Caco-2 (cell line): ENCODE measurements at regions of chr11 and their contacts with region 1.

Region 1: DNA sequence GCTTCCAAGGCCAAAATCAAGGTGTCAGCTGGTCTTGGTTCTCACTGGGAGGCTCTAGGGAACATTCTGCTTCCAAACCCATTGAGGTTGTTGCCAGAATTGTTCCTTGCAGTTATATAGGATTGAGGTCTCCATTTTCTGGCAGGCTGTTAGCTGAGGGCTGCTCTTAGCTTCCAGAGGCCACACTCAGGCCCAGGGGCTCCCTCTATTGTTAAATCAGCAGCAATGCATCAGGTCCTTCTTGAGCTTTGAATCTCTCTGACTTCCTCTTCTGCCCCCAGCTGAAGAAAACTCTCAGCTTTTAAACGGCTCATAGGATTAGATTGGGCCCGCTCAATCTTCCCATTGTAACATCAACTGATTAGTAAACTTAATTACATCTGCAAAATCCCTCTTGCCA is 39.3 kb upstream of the BSX start:
- DNase-seq: peak; percentile 53 to 59
- H3K4me3 ChIP-seq: no peak overlapping the region
- H3K4me3 Mint-ChIP-seq: no peak overlapping the region
- H3K27ac Mint-ChIP-seq: no peak overlapping the region
- H3K4me1 ChIP-seq: no peaks in the 10 kb centered on the region
- H3K4me1 Mint-ChIP-seq: peaks cover 6% of the 10 kb centered on the region
- H3K27me3 ChIP-seq: no peaks in the 10 kb centered on the region; the same call in 1 of the 2 replicates
- H3K27me3 Mint-ChIP-seq: peaks cover 20% of the 10 kb centered on the region
- CTCF ChIP-seq: peak; percentile 79

Region 2: GRCh38 chr11:122584670-122585069 is 436.3 kb before region 1 on chr11:
- CTCF ChIA-PET with region 1: no interaction called
- POLR2A ChIA-PET with region 1: no interaction called
- intact Hi-C with region 1: loop called (anchors 5 kb)
- DNase-seq: no peak
- H3K4me3 ChIP-seq: no peak overlapping the region
- H3K4me3 Mint-ChIP-seq: no peak overlapping the region
- H3K27ac Mint-ChIP-seq: no peak overlapping the region
- H3K4me1 ChIP-seq: no peaks in the 10 kb centered on the region
- H3K4me1 Mint-ChIP-seq: peaks cover 7% of the 10 kb centered on the region
- H3K27me3 ChIP-seq: no peaks in the 10 kb centered on the region
- H3K27me3 Mint-ChIP-seq: peaks cover 9% of the 10 kb centered on the region
- CTCF ChIP-seq: no peak

Region 3: DNA sequence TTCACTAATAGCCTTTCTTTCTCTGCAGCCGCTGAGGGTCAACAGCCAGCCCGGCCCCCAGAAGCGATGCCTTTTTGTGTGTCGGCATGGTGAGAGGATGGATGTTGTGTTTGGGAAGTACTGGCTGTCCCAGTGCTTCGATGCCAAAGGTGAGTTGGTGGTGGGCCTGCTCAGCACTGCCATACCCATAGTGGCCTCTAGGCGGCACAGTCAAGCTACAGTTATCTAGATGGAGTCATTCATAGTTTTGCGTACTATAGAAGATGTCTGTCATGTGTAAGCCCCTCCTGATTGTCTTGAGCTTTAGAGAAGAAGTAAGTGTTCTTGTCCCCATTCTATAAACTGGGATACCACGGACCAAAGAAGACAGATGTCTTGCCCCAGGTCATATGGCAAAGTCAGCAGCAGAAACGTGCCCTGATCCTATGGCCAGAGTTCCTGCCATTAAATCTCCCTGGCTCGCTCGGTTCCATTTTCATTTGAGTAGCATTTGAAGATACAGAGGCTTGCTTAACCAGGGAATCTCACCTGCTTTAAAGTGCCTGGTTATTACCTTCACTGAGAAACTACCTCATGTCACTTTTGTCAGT is 224.7 kb before region 1 on chr11:
- CTCF ChIA-PET with region 1: interaction called, 3 read pairs
- POLR2A ChIA-PET with region 1: no interaction called
- intact Hi-C with region 1: loop called (anchors 5 kb)
- DNase-seq: peak; percentile 58 to 72
- H3K4me3 ChIP-seq: no peak overlapping the region
- H3K4me3 Mint-ChIP-seq: no peak overlapping the region
- H3K27ac Mint-ChIP-seq: no peak overlapping the region
- H3K4me1 ChIP-seq: no peaks in the 10 kb centered on the region
- H3K4me1 Mint-ChIP-seq: peaks cover 5% of the 10 kb centered on the region
- H3K27me3 ChIP-seq: no peaks in the 10 kb centered on the region
- H3K27me3 Mint-ChIP-seq: no peaks in the 10 kb centered on the region
- CTCF ChIP-seq: peak; percentile 87 to 96

Region 4: DNA sequence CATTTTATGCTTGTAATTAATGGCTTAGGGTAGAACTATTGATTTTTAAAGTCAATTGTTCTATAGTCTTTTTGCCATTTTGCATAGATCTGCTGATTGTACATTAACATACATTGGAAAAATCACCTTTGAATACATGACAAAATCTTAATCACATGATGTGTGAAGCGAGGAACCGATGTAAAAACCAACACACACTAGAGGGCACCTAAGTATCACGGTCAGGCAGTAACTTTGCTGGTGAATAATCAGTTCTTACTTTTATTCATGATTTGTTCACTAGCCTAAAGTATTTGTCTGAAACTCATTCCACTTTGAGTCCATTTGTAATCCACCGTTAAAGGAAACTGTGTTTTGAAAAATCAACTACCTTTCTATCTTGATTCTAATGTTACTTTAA is 110.2 kb before region 1 on chr11:
- CTCF ChIA-PET with region 1: interaction called, 13 read pairs
- POLR2A ChIA-PET with region 1: no interaction called
- intact Hi-C with region 1: loop called (anchors 1 kb)
- DNase-seq: peak in 1 of 2 experiments; percentile 51
- H3K4me3 ChIP-seq: no peak overlapping the region
- H3K4me3 Mint-ChIP-seq: no peak overlapping the region
- H3K27ac Mint-ChIP-seq: no peak overlapping the region
- H3K4me1 ChIP-seq: no peaks in the 10 kb centered on the region
- H3K4me1 Mint-ChIP-seq: no peaks in the 10 kb centered on the region
- H3K27me3 ChIP-seq: peaks cover 1% of the 10 kb centered on the region; the same call in 1 of the 2 replicates
- H3K27me3 Mint-ChIP-seq: peaks cover 16% of the 10 kb centered on the region
- CTCF ChIP-seq: peak; percentile 35 to 51

Region 5: GRCh38 chr11:123054301-123055065 is 33.5 kb after region 1 on chr11:
- CTCF ChIA-PET with region 1: interaction called, 17 read pairs
- POLR2A ChIA-PET with region 1: no interaction called
- intact Hi-C with region 1: loop called (anchors 2 kb)
- DNase-seq: peak; percentile 63 to 75
- H3K4me3 ChIP-seq: no peak overlapping the region
- H3K4me3 Mint-ChIP-seq: no peak overlapping the region
- H3K27ac Mint-ChIP-seq: peak overlapping the region; percentile 41
- H3K4me1 ChIP-seq: peaks cover 13% of the 10 kb centered on the region
- H3K4me1 Mint-ChIP-seq: peaks cover 17% of the 10 kb centered on the region
- H3K27me3 ChIP-seq: no peaks in the 10 kb centered on the region
- H3K27me3 Mint-ChIP-seq: no peaks in the 10 kb centered on the region
- CTCF ChIP-seq: peak; percentile 82 to 89

Region 6: DNA sequence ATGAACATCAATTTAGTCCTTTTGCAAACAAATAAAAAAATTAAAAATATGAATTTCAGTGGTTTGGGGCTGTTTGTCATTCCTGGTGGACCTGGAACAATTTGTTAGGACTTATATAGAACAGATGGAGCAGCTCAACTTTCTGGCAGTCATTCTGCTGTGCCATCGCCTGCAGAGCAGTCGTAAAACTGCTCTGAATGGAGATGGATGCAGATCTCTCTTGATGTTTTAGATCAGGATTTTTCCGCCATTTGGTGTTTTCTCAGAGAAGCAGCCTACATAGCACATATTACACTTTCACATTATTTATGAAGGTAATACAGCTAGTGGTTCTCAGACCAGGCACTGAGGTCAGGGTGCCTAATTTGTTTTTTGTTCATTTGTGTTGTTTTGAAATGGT is 72.8 kb after region 1 on chr11:
- CTCF ChIA-PET with region 1: no interaction called
- POLR2A ChIA-PET with region 1: no interaction called
- intact Hi-C with region 1: no loop called
- DNase-seq: no peak
- H3K4me3 ChIP-seq: no peak overlapping the region
- H3K4me3 Mint-ChIP-seq: no peak overlapping the region
- H3K27ac Mint-ChIP-seq: no peak overlapping the region
- H3K4me1 ChIP-seq: no peaks in the 10 kb centered on the region
- H3K4me1 Mint-ChIP-seq: no peaks in the 10 kb centered on the region
- H3K27me3 ChIP-seq: no peaks in the 10 kb centered on the region
- H3K27me3 Mint-ChIP-seq: no peaks in the 10 kb centered on the region
- CTCF ChIP-seq: no peak

Region 7: DNA sequence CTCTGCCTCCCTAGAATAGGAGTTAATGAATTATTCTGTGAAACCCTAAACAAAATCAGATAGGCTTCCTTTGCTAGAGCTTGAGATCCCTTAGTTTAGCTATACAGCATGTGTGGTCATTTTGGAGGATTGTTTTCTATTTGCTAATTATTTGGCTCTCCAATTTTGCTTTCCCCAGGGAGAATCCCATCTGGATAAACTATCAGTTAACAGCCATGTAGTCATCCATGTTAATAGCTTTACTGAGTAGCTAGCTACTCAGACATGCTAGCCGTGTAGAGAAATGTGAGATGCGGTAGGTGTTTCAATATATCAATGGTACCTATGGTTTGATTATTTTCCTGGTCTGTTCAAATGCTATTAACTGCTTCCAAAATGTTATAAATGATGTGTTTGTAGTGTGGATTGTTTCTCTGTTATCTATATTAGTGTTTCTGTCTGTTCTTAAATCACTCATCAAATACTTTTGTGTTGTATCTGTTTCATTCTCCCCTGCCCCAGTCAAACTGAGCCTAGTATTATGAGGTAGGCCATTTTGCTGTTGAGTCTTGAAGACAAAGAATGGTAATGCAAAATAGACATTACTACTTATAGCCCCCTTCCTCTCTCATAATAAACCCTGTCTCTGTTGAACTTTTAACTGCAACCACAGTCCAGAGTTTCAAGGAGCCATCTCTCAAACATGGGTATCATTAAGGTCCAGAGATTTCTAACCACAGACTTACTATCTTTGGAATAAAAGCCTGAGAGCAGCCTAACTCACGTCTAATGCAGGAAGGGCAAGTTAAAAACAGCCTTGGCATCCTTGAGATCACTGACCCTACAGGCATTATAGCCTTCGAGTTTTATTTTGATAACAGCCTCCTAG is 353.0 kb after region 1 on chr11:
- CTCF ChIA-PET with region 1: no interaction called
- POLR2A ChIA-PET with region 1: no interaction called
- intact Hi-C with region 1: no loop called
- DNase-seq: no peak
- H3K4me3 ChIP-seq: no peak overlapping the region
- H3K4me3 Mint-ChIP-seq: no peak overlapping the region
- H3K27ac Mint-ChIP-seq: no peak overlapping the region
- H3K4me1 ChIP-seq: no peaks in the 10 kb centered on the region
- H3K4me1 Mint-ChIP-seq: no peaks in the 10 kb centered on the region
- H3K27me3 ChIP-seq: no peaks in the 10 kb centered on the region; the same call in none of the 2 replicates
- H3K27me3 Mint-ChIP-seq: peaks cover 27% of the 10 kb centered on the region
- CTCF ChIP-seq: no peak

Region 8: DNA sequence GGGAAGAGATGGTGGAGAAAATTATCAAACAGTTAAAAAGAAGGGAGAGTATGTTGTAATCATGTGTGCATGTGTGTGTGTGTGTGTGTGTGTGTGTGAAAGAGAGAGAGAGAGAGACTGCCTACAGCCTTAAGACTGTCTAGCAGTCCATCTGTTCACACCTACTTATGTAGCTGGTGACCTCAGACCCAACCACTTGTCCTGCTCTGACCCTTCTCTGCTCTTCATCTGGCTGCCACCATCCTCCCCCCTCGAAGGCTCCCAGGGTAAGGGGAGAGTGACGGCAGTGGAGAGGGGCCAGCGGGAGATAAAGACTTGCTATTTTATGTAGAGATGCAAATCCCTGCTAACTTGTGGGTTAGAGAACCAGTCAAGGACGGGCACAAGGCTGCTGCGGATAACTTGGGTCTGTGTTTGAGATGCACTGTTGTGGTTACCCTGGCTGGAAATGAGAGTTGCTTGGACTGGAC is 384.2 kb after region 1 on chr11:
- CTCF ChIA-PET with region 1: no interaction called
- POLR2A ChIA-PET with region 1: no interaction called
- intact Hi-C with region 1: no loop called
- DNase-seq: no peak
- H3K4me3 ChIP-seq: no peak overlapping the region
- H3K4me3 Mint-ChIP-seq: no peak overlapping the region
- H3K27ac Mint-ChIP-seq: no peak overlapping the region
- H3K4me1 ChIP-seq: peaks cover 16% of the 10 kb centered on the region
- H3K4me1 Mint-ChIP-seq: peaks cover 7% of the 10 kb centered on the region
- H3K27me3 ChIP-seq: peaks cover 6% of the 10 kb centered on the region
- H3K27me3 Mint-ChIP-seq: peaks cover 31% of the 10 kb centered on the region
- CTCF ChIP-seq: no peak

Region 9: DNA sequence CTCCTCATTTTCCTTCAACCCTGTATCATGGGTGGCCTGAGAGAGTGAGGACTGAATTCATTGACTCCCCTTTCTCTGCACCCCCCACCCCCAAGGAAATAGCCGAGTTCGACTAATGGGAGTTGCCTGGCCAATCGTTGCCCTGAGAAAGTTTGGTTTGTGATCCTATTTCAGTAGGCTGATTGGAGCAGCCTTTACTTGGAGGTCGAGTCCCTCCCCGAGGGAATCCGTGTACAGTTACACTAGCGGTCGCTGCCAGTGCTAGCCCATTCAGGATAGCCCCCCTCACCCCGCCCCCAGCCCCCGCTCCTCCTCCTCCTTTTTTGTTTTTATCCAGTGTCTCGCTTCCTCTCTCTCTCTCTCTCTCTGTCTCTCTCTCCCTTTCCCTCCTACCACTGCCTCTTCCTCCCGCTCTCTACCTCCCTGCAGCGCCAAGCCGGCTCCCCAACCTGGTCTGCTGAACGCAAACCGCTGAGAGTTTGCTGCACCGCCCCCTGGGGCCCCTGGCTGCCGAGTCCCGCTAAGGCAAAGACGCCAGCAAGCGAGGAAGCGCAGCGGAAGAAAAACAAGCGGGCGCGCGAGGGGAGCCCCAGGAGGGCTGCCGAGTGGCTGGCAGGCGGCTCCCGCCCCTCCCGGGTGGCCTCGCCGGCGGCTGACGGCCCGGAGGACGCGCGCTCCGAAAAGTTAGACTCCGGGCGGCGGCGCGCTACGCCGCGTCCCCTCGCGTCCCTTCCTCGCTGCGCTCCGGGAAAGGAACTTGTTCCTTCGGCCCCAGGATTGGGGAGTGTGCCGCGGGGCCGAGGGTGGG is 409.1 kb after region 1 on chr11 and contains the start of gene GRAMD1B:
- CTCF ChIA-PET with region 1: no interaction called
- POLR2A ChIA-PET with region 1: no interaction called
- intact Hi-C with region 1: no loop called
- DNase-seq: peak; percentile 43 to 54
- H3K4me3 ChIP-seq: peak within 1 kb of the TSS; percentile 21
- H3K4me3 Mint-ChIP-seq: peak within 1 kb of the TSS; percentile 62
- H3K27ac Mint-ChIP-seq: no peak within 1 kb of the TSS
- H3K4me1 ChIP-seq: peaks cover 7% of the 10 kb centered on the region
- H3K4me1 Mint-ChIP-seq: no peaks in the 10 kb centered on the region
- H3K27me3 ChIP-seq: no peaks in the 10 kb centered on the region
- H3K27me3 Mint-ChIP-seq: peaks cover 29% of the 10 kb centered on the region
- CTCF ChIP-seq: peak in 1 of 2 experiments; percentile 32
- total RNA-seq, gene GRAMD1B: 1.2 and 1.5 TPM in 2 replicates